ENCODE measurements at regions of chr22 and their contacts with region 1.

Region 1: GRCh38 chr22:40509401-40510134 is 127.0 kb downstream of the MRTFA start:
- DNase-seq: peak; percentile 97
- H3K4me3 Mint-ChIP-seq: peak overlapping the region; percentile 31
- H3K27ac Mint-ChIP-seq: peak overlapping the region; percentile 85
- H3K4me1 Mint-ChIP-seq: peaks cover 44% of the 10 kb centered on the region
- H3K27me3 Mint-ChIP-seq: no peaks in the 10 kb centered on the region
- CTCF ChIP-seq: no peak

Region 2: GRCh38 chr22:40363059-40363458 is 146.5 kb before region 1 on chr22:
- CTCF ChIA-PET with region 1: no interaction called
- POLR2A ChIA-PET with region 1: no interaction called
- intact Hi-C with region 1: no loop called
- DNase-seq: no peak
- H3K4me3 Mint-ChIP-seq: no peak overlapping the region
- H3K27ac Mint-ChIP-seq: no peak overlapping the region
- H3K4me1 Mint-ChIP-seq: no peaks in the 10 kb centered on the region
- H3K27me3 Mint-ChIP-seq: no peaks in the 10 kb centered on the region
- CTCF ChIP-seq: no peak

Region 3: DNA sequence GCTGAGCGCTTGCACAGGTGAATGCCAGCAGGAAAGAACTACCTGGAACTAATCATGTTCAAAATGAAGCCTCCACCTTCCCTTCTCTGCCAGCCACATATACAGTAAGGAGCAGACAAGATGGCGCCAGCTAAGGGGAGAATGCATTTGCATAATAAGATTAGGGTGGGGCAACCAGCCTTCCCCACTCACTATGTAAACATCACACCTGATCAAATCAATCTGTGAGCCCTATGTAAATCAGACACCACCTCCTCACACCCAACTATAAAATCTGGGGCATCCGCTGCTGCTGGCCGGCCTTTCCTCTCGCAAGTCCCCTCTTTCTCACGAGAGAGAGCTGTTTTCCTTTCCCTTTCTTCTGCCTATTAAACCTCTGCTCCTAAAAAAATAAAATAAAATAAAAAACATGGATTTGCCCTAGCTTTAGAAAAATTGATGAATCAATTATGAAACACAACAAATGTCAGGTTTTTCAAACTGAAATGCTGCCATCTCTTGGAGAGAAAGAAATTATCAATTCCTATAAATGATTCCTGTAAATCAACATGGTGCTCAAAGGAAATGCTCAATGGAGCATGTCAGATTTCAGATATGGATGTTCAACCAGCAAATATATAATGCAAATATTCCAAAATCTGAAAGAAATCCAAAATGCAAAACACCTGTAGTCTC is 30.3 kb before region 1 on chr22:
- CTCF ChIA-PET with region 1: interaction called, 3 read pairs
- POLR2A ChIA-PET with region 1: interaction called, 17 read pairs
- intact Hi-C with region 1: no loop called
- DNase-seq: peak; percentile 6
- H3K4me3 Mint-ChIP-seq: no peak overlapping the region
- H3K27ac Mint-ChIP-seq: no peak overlapping the region
- H3K4me1 Mint-ChIP-seq: peaks cover 32% of the 10 kb centered on the region
- H3K27me3 Mint-ChIP-seq: no peaks in the 10 kb centered on the region
- CTCF ChIP-seq: peak; percentile 7

Region 4: GRCh38 chr22:40499187-40499753 is 10.3 kb before region 1 on chr22:
- CTCF ChIA-PET with region 1: interaction called, 4 read pairs
- POLR2A ChIA-PET with region 1: interaction called, 42 read pairs
- intact Hi-C with region 1: no loop called
- DNase-seq: peak; percentile 90
- H3K4me3 Mint-ChIP-seq: peak overlapping the region; percentile 25
- H3K27ac Mint-ChIP-seq: peak overlapping the region; percentile 78
- H3K4me1 Mint-ChIP-seq: peaks cover 29% of the 10 kb centered on the region
- H3K27me3 Mint-ChIP-seq: no peaks in the 10 kb centered on the region
- CTCF ChIP-seq: no peak

Measured in MCF 10A (cell line).